G401 (cell line): ENCODE measurements at regions of chr11 and their contacts with region 1.

Region 1: DNA sequence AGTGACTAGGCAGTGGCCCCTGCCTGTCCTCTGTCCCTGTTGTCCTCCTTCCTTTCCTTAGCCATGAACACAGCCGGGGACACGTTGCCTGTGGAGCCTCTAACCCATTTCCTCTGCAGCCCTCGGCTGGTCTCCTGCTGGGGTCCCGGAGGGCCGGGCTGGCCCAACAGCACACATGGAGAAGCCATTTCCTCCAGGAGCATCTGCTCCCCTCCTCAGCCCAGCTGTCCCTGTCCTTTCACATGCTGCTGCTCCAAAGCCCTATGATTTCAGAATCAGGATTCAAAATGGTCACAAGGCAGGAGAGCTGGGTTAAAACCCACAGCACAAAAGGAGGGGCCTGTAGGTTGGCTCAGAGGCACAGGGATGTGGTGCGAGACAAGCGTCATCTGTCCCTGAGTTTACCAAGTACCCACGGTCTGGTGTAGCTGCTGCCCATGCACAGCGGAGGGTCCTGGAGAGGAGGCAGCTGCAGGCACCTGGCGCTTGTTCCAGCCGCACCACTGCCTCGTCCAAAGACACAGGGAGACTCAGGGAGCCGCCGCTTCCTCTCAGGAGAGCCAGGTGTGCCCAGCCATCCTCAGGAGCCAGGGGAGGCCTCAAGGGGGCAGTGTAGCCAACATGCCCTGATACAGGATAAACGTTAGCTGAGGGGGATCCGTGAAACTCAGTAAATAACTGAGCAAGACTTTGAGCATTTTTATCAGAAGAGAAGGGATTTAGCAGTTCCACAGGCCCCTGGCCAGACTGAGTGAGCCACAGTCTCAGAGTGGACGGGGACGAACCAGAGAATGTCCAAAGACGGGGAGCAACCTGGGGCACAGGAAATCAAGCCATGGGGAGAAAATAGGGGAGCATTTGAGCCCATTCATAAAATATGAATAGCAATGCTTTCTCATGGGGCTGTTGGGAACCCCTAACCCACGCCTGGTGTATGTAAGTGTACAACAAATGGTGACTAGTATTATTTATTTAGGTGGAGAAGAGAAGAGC is 3.9 kb upstream of the VSIG10L2 start:
- DNase-seq: peak; percentile 83

Region 2: DNA sequence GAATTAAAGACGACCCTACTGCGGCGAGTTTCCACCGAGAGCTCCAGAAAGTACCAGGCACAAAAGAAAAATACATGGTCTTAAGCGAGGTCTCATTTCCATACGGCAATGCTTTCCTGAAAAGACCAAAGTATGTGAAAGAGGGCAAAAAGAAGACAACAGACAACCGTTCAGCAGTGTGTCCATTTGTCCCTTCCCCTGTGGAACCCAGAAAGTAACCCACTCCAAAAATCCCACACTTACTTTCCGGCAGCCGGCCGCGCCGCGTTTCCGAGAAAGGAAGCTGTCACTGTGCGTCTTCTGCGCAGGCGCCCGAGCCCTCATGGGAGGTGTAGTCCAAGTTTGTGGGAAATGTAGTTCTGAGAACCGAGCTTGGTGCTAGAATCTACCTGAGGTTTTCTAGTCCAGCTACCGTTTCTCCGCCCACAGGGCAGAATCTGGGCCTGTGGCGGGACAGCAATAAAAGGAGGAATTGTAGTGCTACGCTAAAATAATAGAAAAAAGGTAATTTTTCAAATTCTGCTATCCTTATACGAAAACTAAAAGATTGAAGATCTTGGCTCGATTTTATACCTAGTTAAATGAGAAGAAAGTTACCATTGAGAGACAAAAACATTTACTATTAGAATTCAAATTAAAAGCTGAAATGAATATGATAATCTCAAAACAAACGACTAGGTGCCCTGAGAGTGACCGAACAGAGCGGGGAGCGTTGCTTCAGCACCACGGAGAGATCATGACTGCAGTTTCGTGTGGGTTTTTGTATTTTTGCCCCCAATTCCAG is 38.8 kb before region 1 on chr11 and contains the start of gene PUS3:
- in situ Hi-C with region 1: no loop called
- DNase-seq: peak; percentile 96
- total RNA-seq, gene PUS3: 12.1 and 16.3 TPM in 2 replicates

Region 3: GRCh38 chr11:126211235-126212088 is 269.5 kb after region 1 on chr11 and contains the starts of genes FAM118B and RPUSD4:
- in situ Hi-C with region 1: loop called (anchors 25 kb)
- DNase-seq: peak; percentile 96
- total RNA-seq, gene FAM118B: 33.4 and 64.3 TPM in 2 replicates
- total RNA-seq, gene RPUSD4: 33.1 and 45.4 TPM in 2 replicates